ENCODE measurements at regions of chr18 and their contacts with region 1.

Region 1: DNA sequence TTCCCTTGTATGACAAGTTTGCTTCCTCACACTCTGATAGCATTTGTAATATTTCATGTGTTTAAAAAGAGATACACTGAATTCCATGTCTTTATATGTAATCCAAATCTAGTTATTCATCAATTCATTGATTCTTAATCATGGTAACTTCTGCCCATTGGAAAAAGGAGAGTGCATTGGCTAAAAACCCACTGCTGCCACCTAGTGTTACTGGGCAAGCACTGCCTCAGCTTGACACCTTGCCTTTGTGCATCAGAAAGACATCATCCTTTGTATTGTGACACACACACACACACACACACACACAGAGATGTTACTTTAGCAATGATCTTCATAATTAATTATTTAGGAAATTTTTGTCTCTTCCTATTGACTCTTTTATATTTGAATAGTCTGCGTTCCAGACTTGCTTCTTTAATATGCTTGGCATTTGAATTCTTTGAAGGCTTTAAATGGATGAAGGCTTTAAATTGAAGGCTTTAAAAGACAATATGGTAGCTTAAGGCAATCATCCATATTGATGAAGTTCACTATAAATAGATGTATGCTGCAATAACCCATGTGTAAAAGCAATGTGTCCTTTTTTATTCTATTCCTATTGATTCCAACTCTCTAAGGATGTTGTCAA is 414.2 kb upstream of the CHST9 start:
- DNase-seq: peak; percentile 28
- ATAC-seq: peak; percentile 65
- H3K4me3 ChIP-seq: no peak overlapping the region
- H3K27ac ChIP-seq: no peak overlapping the region
- H3K4me1 ChIP-seq: no peaks in the 10 kb centered on the region
- H3K27me3 ChIP-seq: no peaks in the 10 kb centered on the region
- CTCF ChIP-seq: peak; percentile 74
- POLR2A ChIP-seq: no peak
- RAD21 ChIP-seq: peak; percentile 56

Region 2: DNA sequence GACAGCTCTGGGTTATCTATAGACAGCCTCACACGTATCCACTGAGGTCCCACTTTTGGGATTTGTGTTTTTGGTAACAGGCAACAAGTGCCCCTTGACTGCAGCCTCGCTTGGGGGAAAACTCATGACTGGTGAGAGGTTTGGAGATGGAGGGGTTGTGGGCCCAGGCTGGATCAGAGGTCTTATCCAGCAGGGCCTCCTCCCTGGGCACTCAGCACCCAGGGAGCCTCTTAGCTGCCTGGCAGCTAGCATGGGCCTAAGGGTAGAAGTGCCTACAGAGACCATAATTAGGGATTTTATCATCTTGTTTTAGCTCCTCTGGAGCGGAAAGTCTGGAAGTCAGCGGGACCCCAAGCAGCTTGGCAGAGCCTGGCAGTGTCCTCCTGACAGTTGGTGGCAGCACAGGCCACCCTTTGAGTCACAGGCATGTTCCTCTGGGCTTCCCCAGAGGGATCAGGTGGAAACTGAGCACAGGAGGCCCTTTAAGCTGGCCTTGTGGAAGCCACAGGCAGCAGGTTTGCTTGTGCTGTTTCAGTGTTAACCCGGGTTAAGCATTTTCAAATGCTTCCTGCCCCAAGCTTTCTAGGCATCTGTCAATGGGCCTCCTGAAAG is 1194.0 kb before region 1 on chr18:
- CTCF ChIA-PET with region 1: no interaction called
- POLR2A ChIA-PET with region 1: no interaction called
- dilution Hi-C with region 1: no loop called
- in situ Hi-C with region 1: no loop called
- intact Hi-C with region 1: loop called (anchors 10 kb)
- DNase-seq: peak; percentile 53
- ATAC-seq: peak; percentile 87
- H3K4me3 ChIP-seq: no peak overlapping the region
- H3K27ac ChIP-seq: no peak overlapping the region
- H3K4me1 ChIP-seq: no peaks in the 10 kb centered on the region
- H3K27me3 ChIP-seq: peaks cover 15% of the 10 kb centered on the region
- CTCF ChIP-seq: peak; percentile 66
- POLR2A ChIP-seq: no peak
- RAD21 ChIP-seq: peak; percentile 82

Region 3: GRCh38 chr18:27017901-27018500 is 581.3 kb before region 1 on chr18:
- CTCF ChIA-PET with region 1: no interaction called
- POLR2A ChIA-PET with region 1: no interaction called
- dilution Hi-C with region 1: no loop called
- in situ Hi-C with region 1: no loop called
- intact Hi-C with region 1: loop called (anchors 2 kb)
- DNase-seq: no peak
- ATAC-seq: no peak
- H3K4me3 ChIP-seq: no peak overlapping the region
- H3K27ac ChIP-seq: no peak overlapping the region
- H3K4me1 ChIP-seq: no peaks in the 10 kb centered on the region
- H3K27me3 ChIP-seq: no peaks in the 10 kb centered on the region
- CTCF ChIP-seq: peak; percentile 30; the same call in 1 of the 2 replicates
- POLR2A ChIP-seq: no peak
- RAD21 ChIP-seq: peak; percentile 24; the same call in 1 of the 2 replicates

Region 4: GRCh38 chr18:28439870-28440269 is 840.6 kb after region 1 on chr18:
- CTCF ChIA-PET with region 1: no interaction called
- POLR2A ChIA-PET with region 1: no interaction called
- dilution Hi-C with region 1: no loop called
- in situ Hi-C with region 1: no loop called
- intact Hi-C with region 1: no loop called
- DNase-seq: no peak
- ATAC-seq: no peak
- H3K4me3 ChIP-seq: no peak overlapping the region
- H3K27ac ChIP-seq: no peak overlapping the region
- H3K4me1 ChIP-seq: no peaks in the 10 kb centered on the region
- H3K27me3 ChIP-seq: no peaks in the 10 kb centered on the region
- CTCF ChIP-seq: no peak
- POLR2A ChIP-seq: no peak
- RAD21 ChIP-seq: no peak